Caco-2 (cell line): ENCODE measurements at regions of chr18 and their contacts with region 1.

Region 1: DNA sequence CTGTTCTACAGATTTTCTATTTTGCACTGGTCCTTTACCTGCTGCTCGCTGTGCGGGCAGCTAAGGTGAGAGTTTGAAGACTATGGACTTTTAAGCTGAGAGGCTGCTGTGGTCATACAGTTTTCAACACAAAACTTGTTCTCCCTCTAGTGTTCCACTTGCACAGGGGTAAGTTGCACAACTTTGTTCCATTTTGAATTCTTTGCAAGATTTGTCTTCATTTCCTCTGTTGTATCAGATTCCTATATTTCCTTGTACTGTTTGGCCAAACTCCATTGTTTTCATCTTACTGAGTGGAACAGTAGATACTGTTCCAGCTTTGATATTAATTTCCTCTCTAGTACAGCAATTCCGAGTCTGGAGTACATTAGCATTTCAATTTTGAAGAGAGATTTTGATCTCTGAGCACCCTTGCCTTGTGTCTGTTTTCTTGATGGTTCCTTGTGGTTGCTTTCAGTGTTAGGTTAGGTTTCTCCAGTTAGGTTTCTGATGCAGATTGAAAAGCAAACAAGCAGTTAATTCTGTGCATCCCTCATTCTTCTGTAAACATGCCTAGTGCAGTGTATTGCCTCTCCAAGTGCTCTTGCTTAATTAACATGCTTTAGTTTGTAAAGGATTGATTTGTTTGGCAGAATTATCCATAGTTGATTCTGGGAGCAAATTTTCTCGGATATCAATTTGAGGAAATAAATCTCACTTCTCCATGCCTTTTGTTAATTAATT is 188.8 kb downstream of the PTPRM start:
- DNase-seq: peak in 1 of 2 experiments; percentile 48
- H3K4me3 ChIP-seq: peak overlapping the region; percentile 11
- H3K4me3 Mint-ChIP-seq: peak overlapping the region; percentile 84
- H3K27ac Mint-ChIP-seq: peak overlapping the region; percentile 93
- H3K4me1 ChIP-seq: peaks cover 96% of the 10 kb centered on the region
- H3K4me1 Mint-ChIP-seq: peaks cover 74% of the 10 kb centered on the region
- H3K27me3 ChIP-seq: no peaks in the 10 kb centered on the region
- H3K27me3 Mint-ChIP-seq: no peaks in the 10 kb centered on the region
- CTCF ChIP-seq: peak in 1 of 2 experiments; percentile 56

Region 2: GRCh38 chr18:7370802-7371201 is 385.1 kb before region 1 on chr18:
- CTCF ChIA-PET with region 1: no interaction called
- POLR2A ChIA-PET with region 1: no interaction called
- intact Hi-C with region 1: loop called (anchors 10 kb)
- DNase-seq: peak in 1 of 2 experiments; percentile 62
- H3K4me3 ChIP-seq: 0 out of 2 replicates have a peak overlapping the region, but pooled peaks have one; percentile 13
- H3K4me3 Mint-ChIP-seq: peak overlapping the region; percentile 66
- H3K27ac Mint-ChIP-seq: peak overlapping the region; percentile 10
- H3K4me1 ChIP-seq: peaks cover 17% of the 10 kb centered on the region
- H3K4me1 Mint-ChIP-seq: peaks cover 31% of the 10 kb centered on the region
- H3K27me3 ChIP-seq: no peaks in the 10 kb centered on the region
- H3K27me3 Mint-ChIP-seq: no peaks in the 10 kb centered on the region
- CTCF ChIP-seq: no peak

Region 3: DNA sequence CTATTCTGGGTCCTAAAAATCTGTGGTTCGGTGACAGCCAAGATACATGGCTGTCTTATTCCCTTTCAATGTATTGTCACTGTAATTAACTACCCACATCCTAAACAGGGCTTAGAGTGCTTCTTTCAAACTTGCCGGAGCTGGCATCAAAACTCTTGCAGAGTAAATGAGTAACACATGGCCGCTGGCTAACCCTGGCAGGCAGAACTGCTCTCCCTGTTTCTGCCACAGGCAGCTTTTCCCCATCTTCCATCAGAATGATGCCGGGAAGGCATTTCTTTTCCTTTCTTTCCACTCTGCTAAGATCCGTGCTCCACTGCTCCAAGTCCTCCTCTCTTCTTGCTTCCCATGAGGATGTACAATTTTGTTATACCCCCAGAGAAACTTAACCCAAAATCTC is 243.6 kb before region 1 on chr18:
- CTCF ChIA-PET with region 1: no interaction called
- POLR2A ChIA-PET with region 1: no interaction called
- intact Hi-C with region 1: loop called (anchors 10 kb)
- DNase-seq: no peak
- H3K4me3 ChIP-seq: no peak overlapping the region
- H3K4me3 Mint-ChIP-seq: no peak overlapping the region
- H3K27ac Mint-ChIP-seq: no peak overlapping the region
- H3K4me1 ChIP-seq: peaks cover 10% of the 10 kb centered on the region
- H3K4me1 Mint-ChIP-seq: peaks cover 11% of the 10 kb centered on the region
- H3K27me3 ChIP-seq: 0 out of 2 replicates have a peak, but pooled peaks cover 1% of the 10 kb centered on the region
- H3K27me3 Mint-ChIP-seq: no peaks in the 10 kb centered on the region
- CTCF ChIP-seq: no peak

Region 4: DNA sequence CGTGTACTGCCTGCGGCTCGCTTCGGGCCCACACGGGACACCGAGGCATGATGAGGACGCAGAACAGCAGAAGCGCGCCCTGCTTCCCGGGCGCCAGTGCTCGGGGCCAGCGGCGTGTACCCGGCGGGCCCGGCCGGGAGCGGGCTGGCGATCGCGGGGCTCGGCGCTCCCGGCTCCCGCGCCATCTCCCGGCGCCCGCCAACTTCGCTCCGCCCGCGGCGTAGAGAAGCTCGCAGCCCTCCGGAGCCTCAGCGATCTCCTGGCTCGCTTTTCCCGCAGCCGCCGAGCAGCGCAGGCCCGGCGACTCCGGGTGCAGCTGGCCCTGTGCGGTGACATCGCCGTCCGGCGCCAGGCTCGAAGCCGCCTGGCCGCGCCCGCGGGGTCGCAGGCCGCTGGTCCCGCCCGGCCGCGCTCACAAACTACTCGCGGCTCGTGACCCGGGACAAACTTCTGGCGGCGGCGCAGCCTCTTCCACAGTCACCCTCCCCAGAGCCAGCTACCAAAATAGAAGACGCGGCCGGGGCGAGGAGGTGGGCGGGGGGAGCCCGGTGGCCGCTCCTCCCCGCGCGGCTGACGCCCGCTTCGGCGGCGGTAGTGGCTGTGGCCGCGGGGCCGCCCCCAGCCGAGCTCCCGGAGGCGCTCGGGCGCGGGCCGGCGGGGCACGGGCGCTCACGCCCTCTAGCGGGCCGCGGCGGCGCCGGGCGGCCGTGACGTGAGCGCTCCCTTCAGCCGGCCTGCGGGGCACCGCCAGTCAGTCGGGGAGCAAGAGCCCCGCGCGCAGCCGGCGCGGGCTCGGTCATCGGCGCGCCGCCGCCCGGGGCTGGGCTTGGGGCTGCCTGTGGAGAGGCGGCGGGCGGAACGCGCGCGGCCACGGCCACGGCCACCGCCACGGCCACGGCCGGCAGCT is 189.1 kb before region 1 on chr18 and contains the start of gene PTPRM:
- CTCF ChIA-PET with region 1: interaction called, 5 read pairs
- POLR2A ChIA-PET with region 1: interaction called, 9 read pairs
- intact Hi-C with region 1: loop called (anchors 1 kb)
- DNase-seq: peak; percentile 72 to 89
- H3K4me3 ChIP-seq: peak within 1 kb of the TSS; percentile 93
- H3K4me3 Mint-ChIP-seq: peak within 1 kb of the TSS; percentile 83
- H3K27ac Mint-ChIP-seq: peak within 1 kb of the TSS; percentile 72
- H3K4me1 ChIP-seq: peaks cover 17% of the 10 kb centered on the region
- H3K4me1 Mint-ChIP-seq: peaks cover 16% of the 10 kb centered on the region
- H3K27me3 ChIP-seq: no peaks in the 10 kb centered on the region
- H3K27me3 Mint-ChIP-seq: no peaks in the 10 kb centered on the region
- CTCF ChIP-seq: peak in 1 of 2 experiments; percentile 9
- total RNA-seq, gene PTPRM: 100.0 and 112 TPM in 2 replicates

Region 5: GRCh38 chr18:7735194-7735593 is 20.7 kb before region 1 on chr18:
- CTCF ChIA-PET with region 1: interaction called, 15 read pairs
- POLR2A ChIA-PET with region 1: interaction called, 11 read pairs
- intact Hi-C with region 1: loop called (anchors 1 kb)
- DNase-seq: peak in 1 of 2 experiments; percentile 33
- H3K4me3 ChIP-seq: no peak overlapping the region
- H3K4me3 Mint-ChIP-seq: peak overlapping the region; percentile 51
- H3K27ac Mint-ChIP-seq: peak overlapping the region; percentile 78
- H3K4me1 ChIP-seq: peaks cover 76% of the 10 kb centered on the region
- H3K4me1 Mint-ChIP-seq: peaks cover 40% of the 10 kb centered on the region
- H3K27me3 ChIP-seq: no peaks in the 10 kb centered on the region
- H3K27me3 Mint-ChIP-seq: no peaks in the 10 kb centered on the region
- CTCF ChIP-seq: peak; percentile 49 to 55

Region 6: DNA sequence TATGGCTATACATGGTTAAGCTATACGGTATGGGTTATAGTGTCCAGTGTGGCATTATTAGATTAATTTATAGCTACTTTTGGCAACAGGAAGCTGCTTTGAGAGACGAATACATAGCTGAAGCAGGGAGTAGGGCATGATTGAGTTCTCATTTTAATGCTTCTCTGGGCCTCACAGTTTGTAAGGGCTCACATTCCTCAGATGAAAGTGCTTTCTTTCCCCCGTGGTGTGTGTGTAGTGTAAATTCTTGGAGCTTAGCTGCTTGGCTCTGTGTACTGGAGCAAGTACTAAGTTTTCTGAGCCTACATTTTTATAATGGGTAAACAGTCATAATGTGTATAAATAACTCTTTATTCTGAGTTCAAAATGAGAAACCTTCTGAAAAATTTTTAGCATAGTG is 15.1 kb before region 1 on chr18:
- CTCF ChIA-PET with region 1: interaction called, 15 read pairs
- POLR2A ChIA-PET with region 1: interaction called, 11 read pairs
- intact Hi-C with region 1: no loop called
- DNase-seq: peak in 1 of 2 experiments; percentile 44
- H3K4me3 ChIP-seq: no peak overlapping the region
- H3K4me3 Mint-ChIP-seq: no peak overlapping the region
- H3K27ac Mint-ChIP-seq: peak overlapping the region; percentile 87
- H3K4me1 ChIP-seq: peaks cover 49% of the 10 kb centered on the region
- H3K4me1 Mint-ChIP-seq: peaks cover 35% of the 10 kb centered on the region
- H3K27me3 ChIP-seq: no peaks in the 10 kb centered on the region
- H3K27me3 Mint-ChIP-seq: no peaks in the 10 kb centered on the region
- CTCF ChIP-seq: no peak